Thyroid gland (tissue), 4 donors: ENCODE measurements at regions of chr4 and their contacts with region 1.

Region 1: DNA sequence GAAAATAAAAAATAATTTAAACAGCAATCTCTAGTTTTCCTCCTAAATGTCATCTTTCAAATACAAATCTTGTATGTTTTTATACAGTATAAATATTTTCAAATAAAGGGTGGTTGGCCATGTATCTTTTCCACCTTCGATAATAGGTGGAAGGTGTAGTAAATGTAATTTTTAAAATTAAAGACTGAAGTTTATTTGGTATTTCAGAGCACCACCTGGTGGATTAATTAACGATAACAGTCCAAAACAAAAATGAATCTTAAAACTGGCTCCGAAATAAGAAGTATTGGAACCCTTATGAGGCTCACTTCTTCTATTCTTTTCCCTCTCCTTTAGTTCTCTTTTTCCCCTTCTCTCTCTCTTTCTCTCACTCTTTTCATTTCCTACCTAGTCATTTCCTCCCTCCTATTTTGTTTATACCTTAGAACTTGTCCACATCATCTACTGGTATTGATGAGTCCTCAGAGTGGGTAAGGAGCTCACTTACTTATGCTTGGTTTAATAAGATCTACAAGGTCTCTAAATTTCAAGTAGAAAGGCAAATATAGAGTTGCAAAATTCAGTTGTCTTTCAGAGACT is 82.9 kb upstream of the EXOC1L start:
- DNase-seq: no peak
- H3K4me3 ChIP-seq: no peak overlapping the region
- H3K27ac ChIP-seq: no peak overlapping the region
- H3K4me1 ChIP-seq: no peaks in the 10 kb centered on the region
- H3K27me3 ChIP-seq: no peaks in the 10 kb centered on the region
- CTCF ChIP-seq: peak in 3 of 6 experiments; percentile 38 to 57 (median 42)
- POLR2A ChIP-seq: no peak

Region 2: GRCh38 chr4:55444827-55445226 is 291.9 kb before region 1 on chr4:
- intact Hi-C with region 1: loop called (anchors 10 kb)
- DNase-seq: peak in 1 of 2 donors; percentile 17
- H3K4me3 ChIP-seq: no peak overlapping the region
- H3K27ac ChIP-seq: no peak overlapping the region
- H3K4me1 ChIP-seq: no peaks in the 10 kb centered on the region
- H3K27me3 ChIP-seq: no peaks in the 10 kb centered on the region
- CTCF ChIP-seq: peak in 2 of 6 experiments; percentile 16 to 25
- POLR2A ChIP-seq: no peak